PC-9 (cell line): ENCODE measurements at regions of chr6 and their contacts with region 1.

Region 1: GRCh38 chr6:19204443-19204842 is 632.7 kb upstream of the ID4 start:
- DNase-seq: no peak
- H3K4me3 ChIP-seq: no peak overlapping the region
- H3K27ac ChIP-seq: no peak overlapping the region
- H3K4me1 ChIP-seq: peaks cover 6% of the 10 kb centered on the region; the same call in 1 of the 2 replicates
- H3K27me3 ChIP-seq: no peaks in the 10 kb centered on the region
- CTCF ChIP-seq: peak; percentile 42; the same call in 1 of the 2 replicates

Region 2: GRCh38 chr6:19024737-19025136 is 179.7 kb before region 1 on chr6:
- CTCF ChIA-PET with region 1: no interaction called
- POLR2A ChIA-PET with region 1: no interaction called
- intact Hi-C with region 1: loop called (anchors 10 kb)
- DNase-seq: peak; percentile 43
- H3K4me3 ChIP-seq: no peak overlapping the region
- H3K27ac ChIP-seq: no peak overlapping the region
- H3K4me1 ChIP-seq: no peaks in the 10 kb centered on the region
- H3K27me3 ChIP-seq: no peaks in the 10 kb centered on the region
- CTCF ChIP-seq: peak; percentile 67

Region 3: GRCh38 chr6:19142275-19142674 is 62.2 kb before region 1 on chr6:
- CTCF ChIA-PET with region 1: no interaction called
- POLR2A ChIA-PET with region 1: no interaction called
- intact Hi-C with region 1: no loop called
- DNase-seq: no peak
- H3K4me3 ChIP-seq: no peak overlapping the region
- H3K27ac ChIP-seq: no peak overlapping the region
- H3K4me1 ChIP-seq: no peaks in the 10 kb centered on the region
- H3K27me3 ChIP-seq: no peaks in the 10 kb centered on the region
- CTCF ChIP-seq: no peak

Region 4: DNA sequence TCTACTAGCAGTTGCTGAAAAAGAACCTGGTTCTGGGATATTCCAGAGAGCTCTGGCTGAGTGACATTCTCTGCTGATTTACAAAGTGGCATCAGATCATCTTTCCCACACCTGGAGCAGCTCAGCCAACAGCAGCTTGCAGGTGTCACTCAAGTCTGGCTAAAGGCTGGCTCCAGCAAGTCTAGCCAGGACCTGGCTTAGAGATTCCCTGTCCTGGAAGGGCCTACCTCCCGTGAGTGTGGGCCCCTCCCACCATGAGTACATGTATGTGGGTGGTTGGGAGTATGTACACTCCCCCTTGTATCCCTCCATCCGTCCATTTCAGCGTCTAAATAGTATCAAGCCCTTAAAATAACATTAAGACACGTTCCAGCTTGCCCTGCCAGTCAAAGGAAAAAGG is 93.4 kb after region 1 on chr6:
- CTCF ChIA-PET with region 1: no interaction called
- POLR2A ChIA-PET with region 1: no interaction called
- intact Hi-C with region 1: no loop called
- DNase-seq: no peak
- H3K4me3 ChIP-seq: no peak overlapping the region
- H3K27ac ChIP-seq: no peak overlapping the region
- H3K4me1 ChIP-seq: peaks cover 22% of the 10 kb centered on the region
- H3K27me3 ChIP-seq: no peaks in the 10 kb centered on the region
- CTCF ChIP-seq: no peak

Region 5: GRCh38 chr6:19322691-19323485 is 118.4 kb after region 1 on chr6:
- CTCF ChIA-PET with region 1: no interaction called
- POLR2A ChIA-PET with region 1: no interaction called
- intact Hi-C with region 1: loop called (anchors 10 kb)
- DNase-seq: no peak
- H3K4me3 ChIP-seq: no peak overlapping the region
- H3K27ac ChIP-seq: no peak overlapping the region
- H3K4me1 ChIP-seq: 0 out of 2 replicates have a peak, but pooled peaks cover 3% of the 10 kb centered on the region
- H3K27me3 ChIP-seq: no peaks in the 10 kb centered on the region
- CTCF ChIP-seq: no peak